ENCODE measurements at regions of chr3 and their contacts with region 1.

Region 1: GRCh38 chr3:4284865-4285264 is 18.3 kb upstream of the SETMAR start:
- DNase-seq: no peak
- CTCF ChIP-seq: no peak

Region 2: GRCh38 chr3:4162096-4162495 is 122.8 kb before region 1 on chr3:
- CTCF ChIA-PET with region 1: no interaction called
- POLR2A ChIA-PET with region 1: no interaction called
- DNase-seq: no peak
- CTCF ChIP-seq: no peak

Region 3: DNA sequence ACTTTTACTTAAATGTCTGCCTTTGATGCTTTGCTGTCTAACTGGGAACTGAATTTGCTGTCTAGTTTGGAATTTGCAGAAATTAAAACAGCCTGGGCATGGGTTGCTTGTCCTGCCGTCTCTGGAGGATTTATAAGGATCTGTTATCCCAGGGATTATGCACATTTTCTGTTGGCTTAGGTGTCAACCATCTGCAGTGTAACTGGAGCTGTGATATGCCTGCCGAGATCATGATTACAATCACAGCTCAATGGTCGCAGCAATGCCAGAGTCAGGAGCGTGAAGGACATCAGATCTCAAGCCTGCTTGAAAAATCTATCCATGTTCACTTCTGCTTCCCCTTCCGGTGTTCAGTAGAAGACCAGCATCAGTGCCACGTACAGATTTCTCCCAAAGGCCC is 23.5 kb before region 1 on chr3:
- CTCF ChIA-PET with region 1: no interaction called
- POLR2A ChIA-PET with region 1: no interaction called
- DNase-seq: no peak
- CTCF ChIP-seq: no peak

Region 4: GRCh38 chr3:4271834-4272233 is 13.0 kb before region 1 on chr3:
- CTCF ChIA-PET with region 1: interaction called, 15 read pairs
- POLR2A ChIA-PET with region 1: no interaction called
- DNase-seq: peak; percentile 17
- CTCF ChIP-seq: peak; percentile 28

Measured in GM10248 (cell line).